Dendritic cell treated with granulocyte-macrophage colony-stimulating factor and Interleukin-4, amounts not matched to agents 40 ng/mL and 50 ng/mL, for 4 days (primary cell): ENCODE measurements at regions of chr12 and their contacts with region 1.

Region 1: GRCh38 chr12:69570545-69571399 is 14.5 kb upstream of the CCT2 start:
- H3K4me3 Mint-ChIP-seq: no peak overlapping the region
- H3K27ac Mint-ChIP-seq: no peak overlapping the region
- H3K4me1 Mint-ChIP-seq: no peaks in the 10 kb centered on the region
- H3K27me3 Mint-ChIP-seq: no peaks in the 10 kb centered on the region

Region 2: GRCh38 chr12:69359531-69360347 is 211.0 kb before region 1 on chr12 and contains the start of gene YEATS4:
- intact Hi-C with region 1: loop called (anchors 5 kb)
- H3K4me3 Mint-ChIP-seq: peak within 1 kb of the TSS; percentile 78
- H3K27ac Mint-ChIP-seq: peak within 1 kb of the TSS; percentile 87
- H3K4me1 Mint-ChIP-seq: peaks cover 27% of the 10 kb centered on the region
- H3K27me3 Mint-ChIP-seq: no peaks in the 10 kb centered on the region

Region 3: DNA sequence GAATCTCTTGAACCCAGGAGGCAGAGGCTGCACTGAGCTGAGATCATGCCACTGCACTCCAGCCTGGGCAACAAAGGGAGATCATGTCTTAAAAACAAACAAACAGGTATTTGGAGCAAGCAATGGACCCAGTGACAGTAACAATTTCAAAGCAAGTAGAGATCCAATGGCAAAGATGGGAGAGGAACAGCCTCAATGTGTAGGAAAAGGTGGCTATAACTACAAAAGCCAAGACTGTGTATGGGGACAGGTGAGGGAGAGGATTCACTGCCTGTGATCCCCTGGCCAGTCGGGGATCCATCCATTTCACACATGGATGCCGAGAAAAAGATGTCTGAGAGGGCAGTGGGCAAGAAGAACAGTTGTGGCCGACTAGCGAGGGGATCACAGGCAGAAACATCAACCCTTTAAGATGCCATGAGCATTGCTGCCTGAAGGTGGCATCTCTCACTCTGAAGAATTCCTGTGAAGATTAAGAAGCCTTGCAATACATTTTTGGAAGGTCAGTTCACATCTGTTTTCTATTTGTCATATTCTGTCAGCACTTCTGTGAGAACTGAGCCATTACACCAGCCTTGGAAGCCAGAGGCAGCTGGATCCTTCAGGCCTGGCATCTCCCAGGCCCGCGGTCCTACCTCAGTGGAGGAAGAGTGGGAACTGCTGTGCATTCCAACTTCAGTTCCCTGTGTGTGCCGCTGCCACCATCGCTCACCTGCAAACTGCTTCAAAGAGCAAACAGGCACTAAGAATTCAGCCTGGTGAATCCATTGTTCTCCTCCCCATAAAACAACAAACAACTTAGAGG is 155.1 kb before region 1 on chr12:
- intact Hi-C with region 1: loop called (anchors 10 kb)
- H3K4me3 Mint-ChIP-seq: no peak overlapping the region
- H3K27ac Mint-ChIP-seq: no peak overlapping the region
- H3K4me1 Mint-ChIP-seq: no peaks in the 10 kb centered on the region
- H3K27me3 Mint-ChIP-seq: no peaks in the 10 kb centered on the region

Region 4: DNA sequence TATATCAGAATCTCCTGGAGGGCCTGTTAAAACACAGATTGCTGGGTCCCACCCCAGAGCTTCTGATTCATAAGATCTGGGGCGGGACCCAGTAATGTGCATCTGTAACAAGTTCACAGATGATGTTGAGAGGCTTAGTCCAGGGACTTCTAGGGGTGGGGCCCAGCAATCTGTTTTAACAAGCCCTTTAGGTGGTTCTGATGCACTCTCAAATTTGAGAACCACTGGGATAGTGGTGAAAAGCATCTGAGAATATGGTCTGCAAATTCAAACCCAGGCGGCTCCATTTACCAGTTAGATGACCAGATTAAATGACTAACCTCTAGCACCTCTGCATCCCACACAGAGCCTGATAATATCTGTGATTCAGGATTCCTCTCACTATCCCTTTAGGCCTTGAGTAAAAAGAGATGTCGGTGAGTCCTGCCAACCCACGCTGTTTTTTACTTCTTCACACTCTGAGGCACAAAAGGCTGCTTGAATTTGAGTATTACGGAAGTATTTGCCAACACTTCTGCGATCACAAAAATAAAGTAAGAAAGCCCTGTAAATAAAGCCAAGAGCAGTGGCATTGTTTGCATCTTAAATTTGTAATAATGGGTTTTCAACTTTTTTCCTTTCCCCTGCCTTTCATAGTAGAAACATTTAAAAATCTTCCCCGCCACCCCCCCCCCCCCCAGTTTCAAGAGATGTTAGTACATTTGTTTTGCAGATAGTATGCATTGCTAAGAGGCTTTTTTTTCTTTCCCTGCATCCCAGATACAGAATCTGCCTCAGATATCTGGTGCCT is 102.3 kb before region 1 on chr12:
- intact Hi-C with region 1: no loop called
- H3K4me3 Mint-ChIP-seq: no peak overlapping the region
- H3K27ac Mint-ChIP-seq: peak overlapping the region; percentile 66
- H3K4me1 Mint-ChIP-seq: peaks cover 44% of the 10 kb centered on the region
- H3K27me3 Mint-ChIP-seq: no peaks in the 10 kb centered on the region